ENCODE measurements at regions of chrX and their contacts with region 1.

Region 1: GRCh38 chrX:11111038-11111851 is at the start of gene HCCS:
- H3K4me3 Mint-ChIP-seq: peak within 1 kb of the TSS; percentile 84
- H3K27ac Mint-ChIP-seq: peak within 1 kb of the TSS; percentile 95
- H3K4me1 Mint-ChIP-seq: peaks cover 16% of the 10 kb centered on the region
- H3K27me3 Mint-ChIP-seq: no peaks in the 10 kb centered on the region

Region 2: GRCh38 chrX:10199212-10199611 is 912.0 kb before region 1 on chrX:
- intact Hi-C with region 1: loop called (anchors 5 kb)
- H3K4me3 Mint-ChIP-seq: no peak overlapping the region
- H3K27ac Mint-ChIP-seq: peak overlapping the region; percentile 84
- H3K4me1 Mint-ChIP-seq: peaks cover 25% of the 10 kb centered on the region
- H3K27me3 Mint-ChIP-seq: no peaks in the 10 kb centered on the region

Region 3: DNA sequence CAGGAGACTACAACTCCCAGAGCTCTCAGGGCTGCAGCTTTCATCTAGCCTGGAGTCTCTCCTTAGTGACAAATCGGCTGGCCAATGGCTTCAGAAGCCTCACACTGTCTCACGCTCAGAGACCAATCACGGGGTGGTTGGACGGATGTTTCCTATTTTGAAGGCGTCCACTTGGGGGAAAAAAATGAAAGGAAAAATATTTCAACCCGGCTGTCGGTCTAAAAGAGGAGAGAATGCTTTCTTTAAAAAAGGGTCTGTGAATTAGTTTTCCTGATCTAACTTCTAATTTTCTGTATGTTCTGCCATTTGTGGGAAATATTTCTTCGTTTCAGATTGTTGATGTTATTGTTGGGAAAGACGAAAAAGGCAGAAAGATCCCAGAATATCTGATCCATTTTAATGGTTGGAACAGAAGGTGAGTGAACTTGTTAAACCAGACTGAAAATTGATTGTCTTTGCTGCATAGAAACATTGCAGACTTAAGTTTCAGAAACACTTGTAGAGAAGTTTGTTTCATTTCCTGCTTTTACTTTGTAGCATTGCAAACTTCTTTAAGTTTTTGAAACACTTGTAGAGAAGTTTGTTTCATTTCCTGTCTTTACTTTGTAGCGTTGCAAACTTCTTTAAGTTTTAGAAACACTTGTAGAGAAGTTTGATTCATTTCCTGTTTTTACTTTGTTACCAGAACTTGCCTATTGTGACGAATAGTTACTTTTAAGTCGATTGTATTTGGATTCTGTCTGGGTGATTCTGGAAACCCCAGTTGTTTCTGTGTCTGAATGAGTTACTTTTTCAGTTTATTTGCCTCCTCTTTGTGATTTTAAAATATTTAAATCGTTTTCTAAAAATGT is 648.4 kb after region 1 on chrX:
- intact Hi-C with region 1: loop called (anchors 10 kb)
- H3K4me3 Mint-ChIP-seq: peak overlapping the region; percentile 96
- H3K27ac Mint-ChIP-seq: peak overlapping the region; percentile 96
- H3K4me1 Mint-ChIP-seq: peaks cover 48% of the 10 kb centered on the region
- H3K27me3 Mint-ChIP-seq: no peaks in the 10 kb centered on the region